Activated CD4-positive, alpha-beta T cell treated with anti-CD3 and anti-CD28 coated beads for 36 hours (primary cell): ENCODE measurements at regions of chr5 and their contacts with region 1.

Region 1: GRCh38 chr5:151126199-151126645 is 31.4 kb downstream of the ANXA6 start:
- DNase-seq: peak; percentile 81
- ATAC-seq: peak; percentile 44
- H3K4me3 Mint-ChIP-seq: no peak overlapping the region
- H3K27ac Mint-ChIP-seq: peak overlapping the region; percentile 62
- H3K4me1 Mint-ChIP-seq: peaks cover 75% of the 10 kb centered on the region
- H3K27me3 Mint-ChIP-seq: no peaks in the 10 kb centered on the region

Region 2: DNA sequence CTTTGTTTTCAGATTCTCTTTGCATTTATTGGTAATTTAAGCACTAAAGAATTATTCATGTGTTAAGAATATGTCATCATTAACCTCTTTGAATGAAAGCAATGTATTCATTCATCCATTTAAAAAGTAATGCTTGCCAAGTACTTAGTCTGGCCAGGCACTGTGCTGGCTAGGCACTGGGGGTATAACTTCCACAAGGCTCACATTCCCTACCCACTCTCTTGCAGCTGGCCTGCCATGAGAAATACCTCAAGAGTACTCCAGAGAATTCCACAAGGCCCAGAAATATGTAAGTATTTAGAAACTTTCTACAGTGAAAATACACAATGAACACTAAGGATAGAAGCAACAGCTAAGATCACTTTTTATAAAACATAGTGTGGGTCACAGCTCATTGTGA is 246.9 kb before region 1 on chr5:
- CTCF ChIA-PET with region 1: no interaction called
- POLR2A ChIA-PET with region 1: no interaction called
- intact Hi-C with region 1: no loop called
- DNase-seq: no peak
- ATAC-seq: no peak
- H3K4me3 Mint-ChIP-seq: no peak overlapping the region
- H3K27ac Mint-ChIP-seq: no peak overlapping the region
- H3K4me1 Mint-ChIP-seq: no peaks in the 10 kb centered on the region
- H3K27me3 Mint-ChIP-seq: no peaks in the 10 kb centered on the region

Region 3: DNA sequence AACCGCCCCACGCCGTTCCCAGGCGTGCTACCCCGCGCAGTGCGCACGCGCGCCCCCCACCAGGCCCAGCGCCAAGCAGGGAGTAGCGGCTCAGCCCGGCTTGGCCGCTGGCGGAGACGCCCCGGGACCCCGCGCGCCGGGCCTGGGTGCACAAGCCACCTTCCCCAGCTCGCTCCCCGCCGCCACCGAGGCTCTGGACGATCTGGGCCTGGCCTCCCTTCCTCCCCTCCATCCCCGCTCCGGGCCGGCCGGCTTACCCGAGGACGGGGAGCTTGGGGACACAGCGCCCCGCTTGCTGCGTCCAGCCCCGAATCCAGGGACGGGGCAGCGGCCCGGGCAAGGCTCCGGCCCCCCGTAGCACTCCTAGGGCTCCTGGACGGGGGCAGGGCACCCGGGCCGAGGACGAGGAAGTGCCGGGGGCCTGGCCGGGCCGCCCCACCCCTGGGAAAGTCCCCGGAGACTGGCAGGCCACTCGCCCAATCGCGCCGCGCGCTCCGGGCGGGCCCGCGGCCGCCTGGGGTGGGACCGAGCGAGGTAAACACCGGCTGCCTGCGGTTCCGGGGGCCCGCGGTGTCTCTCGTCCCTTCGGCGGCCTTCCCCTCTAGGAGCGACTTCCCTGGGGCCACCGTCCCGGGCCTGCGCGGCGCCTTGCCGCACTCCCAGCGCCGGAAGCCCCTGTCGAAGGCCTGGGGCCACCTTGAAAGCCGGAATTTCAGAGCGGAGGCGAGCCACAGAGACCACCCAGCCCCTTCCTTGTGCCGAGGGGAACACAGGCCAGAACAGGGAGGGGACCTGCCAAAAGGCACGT is 45.4 kb before region 1 on chr5 and contains the start of gene TNIP1:
- CTCF ChIA-PET with region 1: interaction called, 14 read pairs
- POLR2A ChIA-PET with region 1: interaction called, 4 read pairs
- intact Hi-C with region 1: no loop called
- DNase-seq: peak; percentile 96
- ATAC-seq: peak; percentile 67
- H3K4me3 Mint-ChIP-seq: peak within 1 kb of the TSS; percentile 80
- H3K27ac Mint-ChIP-seq: peak within 1 kb of the TSS; percentile 91
- H3K4me1 Mint-ChIP-seq: peaks cover 74% of the 10 kb centered on the region
- H3K27me3 Mint-ChIP-seq: no peaks in the 10 kb centered on the region
- total RNA-seq, gene TNIP1: 351 to 408 TPM

Region 4: DNA sequence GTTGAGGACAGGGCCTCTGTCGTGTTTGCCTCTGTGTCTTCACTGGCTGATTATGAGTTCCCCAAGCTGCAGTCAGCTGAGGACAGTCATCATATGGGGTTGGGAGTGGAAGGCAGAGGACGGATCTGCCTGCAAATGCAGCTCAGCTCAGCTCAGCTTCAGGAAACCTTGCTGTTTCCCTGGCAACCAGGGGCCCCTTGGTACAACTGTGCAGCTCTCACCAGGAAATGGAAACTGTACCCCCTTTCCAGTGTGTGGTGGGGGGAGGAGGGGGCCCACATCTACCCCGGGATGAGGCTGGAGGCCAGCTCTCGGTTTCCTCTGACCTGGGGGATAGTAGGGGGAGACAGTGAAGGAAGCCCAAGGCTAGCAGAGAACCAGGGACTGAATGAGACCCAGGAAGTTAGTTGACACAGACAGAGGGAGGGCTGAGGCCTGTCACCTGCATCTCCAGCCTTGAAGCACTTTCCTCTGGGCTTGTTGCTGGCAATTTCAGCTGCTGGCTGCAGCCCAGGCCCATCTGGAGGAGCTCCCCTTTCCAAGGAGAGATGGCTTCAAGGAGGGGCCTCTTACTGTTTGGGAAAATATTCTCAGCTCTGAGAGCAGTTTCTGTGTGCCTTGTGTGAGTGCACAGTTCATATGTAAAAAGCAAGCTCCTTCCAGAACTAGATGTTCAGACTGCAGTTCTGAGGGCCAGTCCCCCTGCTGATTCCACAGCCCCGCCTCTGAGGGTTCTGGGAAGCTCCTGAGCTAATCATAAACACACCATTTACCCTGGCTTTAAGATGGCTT is 24.4 kb after region 1 on chr5:
- CTCF ChIA-PET with region 1: interaction called, 216 read pairs
- POLR2A ChIA-PET with region 1: interaction called, 10 read pairs
- intact Hi-C with region 1: no loop called
- DNase-seq: peak; percentile 87
- ATAC-seq: peak; percentile 64
- H3K4me3 Mint-ChIP-seq: peak overlapping the region; percentile 46
- H3K27ac Mint-ChIP-seq: peak overlapping the region; percentile 89
- H3K4me1 Mint-ChIP-seq: peaks cover 94% of the 10 kb centered on the region
- H3K27me3 Mint-ChIP-seq: no peaks in the 10 kb centered on the region

Region 5: GRCh38 chr5:151223469-151224264 is 97.4 kb after region 1 on chr5 and contains the start of gene CCDC69:
- CTCF ChIA-PET with region 1: interaction called, 10 read pairs
- POLR2A ChIA-PET with region 1: interaction called, 3 read pairs
- intact Hi-C with region 1: no loop called
- DNase-seq: peak; percentile 75
- ATAC-seq: peak; percentile 50
- H3K4me3 Mint-ChIP-seq: peak within 1 kb of the TSS; percentile 87
- H3K27ac Mint-ChIP-seq: peak within 1 kb of the TSS; percentile 94
- H3K4me1 Mint-ChIP-seq: peaks cover 57% of the 10 kb centered on the region
- H3K27me3 Mint-ChIP-seq: no peaks in the 10 kb centered on the region
- total RNA-seq, gene CCDC69: 24.8 to 26.9 TPM

Region 6: GRCh38 chr5:151315998-151316597 is 189.9 kb after region 1 on chr5:
- CTCF ChIA-PET with region 1: interaction called, 10 read pairs
- POLR2A ChIA-PET with region 1: no interaction called
- intact Hi-C with region 1: loop called in 1 of 2 experiments (anchors 5 kb)
- DNase-seq: peak; percentile 80
- ATAC-seq: peak; percentile 66
- H3K4me3 Mint-ChIP-seq: no peak overlapping the region
- H3K27ac Mint-ChIP-seq: no peak overlapping the region
- H3K4me1 Mint-ChIP-seq: no peaks in the 10 kb centered on the region
- H3K27me3 Mint-ChIP-seq: peaks cover 11% of the 10 kb centered on the region